Ovary (tissue), 10 donors: ENCODE measurements at regions of chr1 and their contacts with region 1.

Region 1: GRCh38 chr1:203368624-203369451 is 17.9 kb upstream of the FMOD start:
- DNase-seq: peak; percentile 65 to 91 (median 78)
- H3K4me3 ChIP-seq: no peak overlapping the region
- H3K27ac ChIP-seq: peak overlapping the region; percentile 50 to 71
- H3K4me1 ChIP-seq: peaks cover 8% of the 10 kb centered on the region
- H3K27me3 ChIP-seq: no peaks in the 10 kb centered on the region
- CTCF ChIP-seq: peak; percentile 17 to 90 (median 89)
- EP300 ChIP-seq: peak; percentile 69
- POLR2A ChIP-seq: peak; percentile 27

Region 2: GRCh38 chr1:203326830-203327683 is 41.8 kb before region 1 on chr1:
- intact Hi-C with region 1: no loop called
- DNase-seq: peak; percentile 95 to 97 (median 95)
- H3K4me3 ChIP-seq: peak overlapping the region; percentile 44
- H3K27ac ChIP-seq: peak overlapping the region; percentile 74 to 91
- H3K4me1 ChIP-seq: peaks cover 22% of the 10 kb centered on the region
- H3K27me3 ChIP-seq: no peaks in the 10 kb centered on the region
- CTCF ChIP-seq: no peak
- EP300 ChIP-seq: no peak
- POLR2A ChIP-seq: peak; percentile 82

Region 3: DNA sequence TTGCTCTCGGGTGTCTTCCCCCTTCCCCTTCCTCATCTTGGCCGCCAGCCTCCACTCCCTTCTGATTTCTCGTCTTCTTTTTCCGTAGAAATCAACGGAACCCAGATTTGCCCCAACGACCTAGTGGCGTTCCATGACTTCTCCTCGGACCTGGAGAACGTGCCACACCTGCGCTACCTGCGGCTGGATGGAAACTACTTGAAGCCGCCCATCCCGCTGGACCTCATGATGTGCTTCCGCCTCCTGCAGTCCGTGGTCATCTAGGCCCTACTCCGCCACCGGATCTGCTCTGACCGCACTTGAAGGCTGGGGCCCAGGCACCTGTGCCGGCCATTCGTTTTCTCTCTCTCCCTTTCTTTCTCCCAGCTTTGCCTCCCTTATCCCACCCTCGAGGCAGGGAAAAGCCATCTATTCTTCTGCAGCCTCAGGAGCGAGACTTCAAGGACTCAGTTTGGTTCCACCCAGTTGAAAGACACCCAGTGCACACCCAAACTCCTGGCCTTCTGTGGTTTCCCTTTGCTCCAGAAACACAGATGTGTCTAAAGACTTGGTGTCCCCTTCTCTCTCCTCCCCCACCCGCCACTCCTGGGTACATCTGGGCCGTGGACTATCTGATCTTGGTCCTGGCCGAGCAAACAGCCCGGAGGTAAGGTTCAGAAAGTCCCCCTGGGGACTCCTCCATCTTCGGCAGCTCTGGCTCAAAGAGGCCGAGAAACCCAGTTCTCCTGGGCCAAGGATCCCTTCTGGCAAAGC is 118.0 kb after region 1 on chr1:
- intact Hi-C with region 1: loop called in 3 of 4 experiments (anchors 1 to 10 kb)
- DNase-seq: peak in 4 of 5 donors; percentile 62 to 67 (median 64)
- H3K4me3 ChIP-seq: peak overlapping the region; percentile 9
- H3K27ac ChIP-seq: peak overlapping the region; percentile 87 to 94
- H3K4me1 ChIP-seq: peaks cover 11% of the 10 kb centered on the region
- H3K27me3 ChIP-seq: no peaks in the 10 kb centered on the region
- CTCF ChIP-seq: no peak
- EP300 ChIP-seq: no peak
- POLR2A ChIP-seq: no peak